ENCODE measurements at regions of chr3 and their contacts with region 1.

Region 1: GRCh38 chr3:105868742-105869530 is at the start of gene CBLB:
- DNase-seq: peak; percentile 88 to 90
- H3K4me3 ChIP-seq: peak within 1 kb of the TSS; percentile 99
- H3K4me3 Mint-ChIP-seq: peak within 1 kb of the TSS; percentile 89
- H3K27ac Mint-ChIP-seq: peak within 1 kb of the TSS; percentile 94
- H3K4me1 ChIP-seq: peaks cover 18% of the 10 kb centered on the region
- H3K4me1 Mint-ChIP-seq: no peaks in the 10 kb centered on the region
- H3K27me3 ChIP-seq: no peaks in the 10 kb centered on the region
- H3K27me3 Mint-ChIP-seq: no peaks in the 10 kb centered on the region
- CTCF ChIP-seq: no peak
- total RNA-seq, gene CBLB: 29.6 and 34.3 TPM in 2 replicates

Region 2: GRCh38 chr3:104892044-104892443 is 976.9 kb before region 1 on chr3:
- CTCF ChIA-PET with region 1: no interaction called
- POLR2A ChIA-PET with region 1: no interaction called
- intact Hi-C with region 1: no loop called
- DNase-seq: no peak
- H3K4me3 ChIP-seq: no peak overlapping the region
- H3K4me3 Mint-ChIP-seq: no peak overlapping the region
- H3K27ac Mint-ChIP-seq: no peak overlapping the region
- H3K4me1 ChIP-seq: no peaks in the 10 kb centered on the region
- H3K4me1 Mint-ChIP-seq: no peaks in the 10 kb centered on the region
- H3K27me3 ChIP-seq: no peaks in the 10 kb centered on the region
- H3K27me3 Mint-ChIP-seq: no peaks in the 10 kb centered on the region
- CTCF ChIP-seq: no peak

Region 3: GRCh38 chr3:105678017-105678416 is 190.9 kb before region 1 on chr3:
- CTCF ChIA-PET with region 1: no interaction called
- POLR2A ChIA-PET with region 1: no interaction called
- intact Hi-C with region 1: no loop called
- DNase-seq: no peak
- H3K4me3 ChIP-seq: no peak overlapping the region
- H3K4me3 Mint-ChIP-seq: no peak overlapping the region
- H3K27ac Mint-ChIP-seq: no peak overlapping the region
- H3K4me1 ChIP-seq: peaks cover 7% of the 10 kb centered on the region; the same call in 1 of the 2 replicates
- H3K4me1 Mint-ChIP-seq: peaks cover under 1% of the 10 kb centered on the region
- H3K27me3 ChIP-seq: no peaks in the 10 kb centered on the region
- H3K27me3 Mint-ChIP-seq: no peaks in the 10 kb centered on the region
- CTCF ChIP-seq: no peak

Region 4: DNA sequence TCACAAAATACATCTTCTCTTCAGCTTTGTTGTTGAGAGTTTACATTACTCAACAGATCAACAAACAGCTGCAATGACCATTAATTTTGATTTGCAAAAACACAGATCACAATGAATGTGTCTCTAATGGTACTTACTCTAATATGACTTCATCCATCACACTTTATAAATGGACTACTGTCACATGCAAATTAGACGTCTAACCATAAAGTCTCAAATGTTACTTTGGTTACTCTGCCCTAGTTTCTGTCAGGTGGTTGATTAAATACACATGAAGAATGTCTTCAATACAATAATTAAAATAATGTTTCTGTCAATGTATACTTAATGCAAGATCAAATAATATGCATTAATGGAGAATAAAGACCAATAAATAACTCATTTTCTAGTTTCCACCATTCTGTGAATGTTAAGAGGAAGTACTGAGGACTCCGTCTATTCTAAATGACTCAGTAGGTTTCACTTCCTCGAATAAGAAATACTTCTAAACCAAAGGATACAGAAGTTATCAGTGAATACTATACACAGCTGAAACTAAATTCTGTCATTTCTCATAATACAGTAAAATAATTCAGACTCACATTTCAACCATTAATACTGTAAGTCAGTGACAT is 145.9 kb before region 1 on chr3:
- CTCF ChIA-PET with region 1: no interaction called
- POLR2A ChIA-PET with region 1: no interaction called
- intact Hi-C with region 1: no loop called
- DNase-seq: no peak
- H3K4me3 ChIP-seq: no peak overlapping the region
- H3K4me3 Mint-ChIP-seq: no peak overlapping the region
- H3K27ac Mint-ChIP-seq: no peak overlapping the region
- H3K4me1 ChIP-seq: no peaks in the 10 kb centered on the region
- H3K4me1 Mint-ChIP-seq: no peaks in the 10 kb centered on the region
- H3K27me3 ChIP-seq: no peaks in the 10 kb centered on the region
- H3K27me3 Mint-ChIP-seq: no peaks in the 10 kb centered on the region
- CTCF ChIP-seq: no peak

Region 5: GRCh38 chr3:105809208-105809888 is 59.6 kb before region 1 on chr3:
- CTCF ChIA-PET with region 1: no interaction called
- POLR2A ChIA-PET with region 1: no interaction called
- intact Hi-C with region 1: loop called (anchors 2 kb)
- DNase-seq: peak in 1 of 2 experiments; percentile 22
- H3K4me3 ChIP-seq: no peak overlapping the region
- H3K4me3 Mint-ChIP-seq: no peak overlapping the region
- H3K27ac Mint-ChIP-seq: no peak overlapping the region
- H3K4me1 ChIP-seq: peaks cover 8% of the 10 kb centered on the region
- H3K4me1 Mint-ChIP-seq: peaks cover 17% of the 10 kb centered on the region
- H3K27me3 ChIP-seq: no peaks in the 10 kb centered on the region
- H3K27me3 Mint-ChIP-seq: no peaks in the 10 kb centered on the region
- CTCF ChIP-seq: no peak

Region 6: DNA sequence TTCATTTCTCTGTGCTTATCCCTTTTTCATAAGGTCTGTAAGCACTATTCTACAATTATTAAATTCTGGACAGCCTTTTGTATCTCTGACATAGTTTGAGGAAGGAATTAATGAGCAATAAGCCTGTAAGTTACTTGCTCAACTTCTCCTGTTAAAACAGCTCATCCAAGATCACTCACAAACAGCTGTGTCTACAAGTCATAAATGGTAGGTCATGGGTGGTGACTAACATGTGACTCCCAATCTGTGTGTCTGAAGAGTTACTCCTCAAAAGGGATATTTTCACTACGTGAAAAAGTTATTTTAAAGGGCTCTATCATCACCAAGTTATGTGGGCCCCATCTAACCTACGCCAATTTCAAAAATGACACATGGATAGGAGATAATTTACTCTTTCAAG is 145.0 kb after region 1 on chr3:
- CTCF ChIA-PET with region 1: no interaction called
- POLR2A ChIA-PET with region 1: no interaction called
- intact Hi-C with region 1: loop called (anchors 1 kb)
- DNase-seq: peak; percentile 49 to 57
- H3K4me3 ChIP-seq: no peak overlapping the region
- H3K4me3 Mint-ChIP-seq: peak overlapping the region; percentile 49
- H3K27ac Mint-ChIP-seq: peak overlapping the region; percentile 48
- H3K4me1 ChIP-seq: peaks cover 25% of the 10 kb centered on the region
- H3K4me1 Mint-ChIP-seq: peaks cover 7% of the 10 kb centered on the region
- H3K27me3 ChIP-seq: no peaks in the 10 kb centered on the region
- H3K27me3 Mint-ChIP-seq: no peaks in the 10 kb centered on the region
- CTCF ChIP-seq: no peak

Region 7: GRCh38 chr3:106119614-106120082 is 250.7 kb after region 1 on chr3:
- CTCF ChIA-PET with region 1: no interaction called
- POLR2A ChIA-PET with region 1: no interaction called
- intact Hi-C with region 1: loop called (anchors 10 kb)
- DNase-seq: no peak
- H3K4me3 ChIP-seq: no peak overlapping the region
- H3K4me3 Mint-ChIP-seq: no peak overlapping the region
- H3K27ac Mint-ChIP-seq: no peak overlapping the region
- H3K4me1 ChIP-seq: peaks cover 12% of the 10 kb centered on the region
- H3K4me1 Mint-ChIP-seq: peaks cover 19% of the 10 kb centered on the region
- H3K27me3 ChIP-seq: no peaks in the 10 kb centered on the region
- H3K27me3 Mint-ChIP-seq: no peaks in the 10 kb centered on the region
- CTCF ChIP-seq: no peak